ENCODE measurements at regions of chr13 and their contacts with region 1.

Region 1: GRCh38 chr13:74287724-74288169 is 153.5 kb upstream of the KLF12 start:
- DNase-seq: peak; percentile 87
- ATAC-seq: peak; percentile 73
- H3K4me3 Mint-ChIP-seq: peak overlapping the region; percentile 60
- H3K27ac Mint-ChIP-seq: peak overlapping the region; percentile 78
- H3K4me1 Mint-ChIP-seq: peaks cover 43% of the 10 kb centered on the region
- H3K27me3 Mint-ChIP-seq: no peaks in the 10 kb centered on the region

Region 2: DNA sequence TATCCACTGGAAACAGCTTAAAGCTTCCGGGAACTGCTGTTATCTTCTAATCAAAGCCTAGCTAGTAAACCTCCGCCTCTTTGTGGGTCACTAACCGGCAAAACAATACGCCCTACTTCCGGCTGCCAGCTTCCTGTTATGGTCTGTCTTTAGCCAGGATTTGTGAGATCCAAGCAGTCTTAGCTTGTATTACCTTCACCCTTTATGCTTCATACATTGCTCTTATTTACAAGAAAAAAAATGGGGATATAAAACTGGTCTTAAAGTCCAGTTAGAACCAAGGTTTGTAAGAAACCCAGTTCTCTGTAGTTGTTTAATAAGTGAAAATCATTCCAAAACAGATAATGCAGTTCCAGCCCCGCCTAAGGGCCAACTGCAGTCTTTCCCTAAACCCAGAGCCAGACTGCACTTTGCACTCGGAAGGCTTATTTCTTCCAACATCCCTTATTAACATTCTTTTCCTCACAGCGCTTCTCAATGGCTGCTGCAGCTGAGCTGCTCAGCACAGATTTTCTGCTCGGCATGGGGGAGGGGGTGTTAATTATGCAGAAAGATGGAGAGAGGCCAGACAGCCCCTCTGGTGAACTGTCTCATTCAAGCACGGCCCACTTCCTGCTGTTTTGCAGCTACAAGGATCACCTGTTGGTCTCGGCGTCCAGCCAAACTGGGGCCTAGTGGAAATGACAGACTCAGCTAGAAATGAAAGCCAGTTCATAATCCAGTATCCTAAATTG is 521.9 kb before region 1 on chr13:
- CTCF ChIA-PET with region 1: interaction called, 21 read pairs
- POLR2A ChIA-PET with region 1: no interaction called
- DNase-seq: peak; percentile 84
- ATAC-seq: peak; percentile 89
- H3K4me3 Mint-ChIP-seq: peak overlapping the region; percentile 77
- H3K27ac Mint-ChIP-seq: peak overlapping the region; percentile 97
- H3K4me1 Mint-ChIP-seq: peaks cover 50% of the 10 kb centered on the region
- H3K27me3 Mint-ChIP-seq: no peaks in the 10 kb centered on the region

Region 3: DNA sequence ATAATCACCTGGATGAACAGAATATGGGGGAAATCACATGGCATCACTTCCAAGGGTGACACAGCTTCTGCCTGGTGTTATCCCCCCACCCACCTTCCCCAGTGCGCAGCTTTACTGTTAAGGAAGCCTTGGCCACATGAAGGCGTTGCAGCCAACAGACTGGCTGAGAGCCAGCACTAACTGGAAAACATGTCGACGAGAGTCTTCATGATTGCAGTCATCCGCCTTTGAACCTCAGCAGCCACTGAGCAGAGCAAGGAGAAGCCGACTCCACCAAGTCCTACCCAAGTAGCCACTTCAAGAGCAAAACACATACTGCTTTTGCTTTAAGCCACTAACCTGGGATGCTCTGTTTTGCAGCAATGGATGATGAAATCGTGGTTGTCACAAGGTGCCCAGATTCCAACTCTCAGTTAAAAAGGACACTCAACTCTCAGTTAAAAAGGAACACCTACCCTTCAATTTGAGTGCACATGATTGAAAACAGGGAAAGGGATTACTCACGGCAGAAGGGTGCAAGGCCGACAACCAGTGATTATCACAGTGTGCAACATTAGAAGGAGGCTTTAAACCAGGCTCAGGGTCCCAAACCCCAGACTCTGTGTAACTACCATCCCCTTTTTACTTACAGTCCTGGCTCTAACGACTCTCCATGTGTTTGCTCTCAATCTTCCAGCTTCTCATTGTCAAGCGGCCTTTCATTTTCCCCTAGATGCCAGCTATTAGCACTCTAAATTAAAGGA is 302.6 kb before region 1 on chr13:
- CTCF ChIA-PET with region 1: interaction called, 13 read pairs
- POLR2A ChIA-PET with region 1: no interaction called
- DNase-seq: peak; percentile 71
- ATAC-seq: peak; percentile 85
- H3K4me3 Mint-ChIP-seq: peak overlapping the region; percentile 66
- H3K27ac Mint-ChIP-seq: peak overlapping the region; percentile 85
- H3K4me1 Mint-ChIP-seq: peaks cover 36% of the 10 kb centered on the region
- H3K27me3 Mint-ChIP-seq: no peaks in the 10 kb centered on the region

Region 4: GRCh38 chr13:74133657-74134201 is 154.0 kb before region 1 on chr13:
- CTCF ChIA-PET with region 1: interaction called, 134 read pairs
- POLR2A ChIA-PET with region 1: interaction called, 73 read pairs
- DNase-seq: peak; percentile 95
- ATAC-seq: peak; percentile 67
- H3K4me3 Mint-ChIP-seq: no peak overlapping the region
- H3K27ac Mint-ChIP-seq: peak overlapping the region; percentile 100
- H3K4me1 Mint-ChIP-seq: peaks cover 33% of the 10 kb centered on the region
- H3K27me3 Mint-ChIP-seq: peaks cover 3% of the 10 kb centered on the region

Region 5: DNA sequence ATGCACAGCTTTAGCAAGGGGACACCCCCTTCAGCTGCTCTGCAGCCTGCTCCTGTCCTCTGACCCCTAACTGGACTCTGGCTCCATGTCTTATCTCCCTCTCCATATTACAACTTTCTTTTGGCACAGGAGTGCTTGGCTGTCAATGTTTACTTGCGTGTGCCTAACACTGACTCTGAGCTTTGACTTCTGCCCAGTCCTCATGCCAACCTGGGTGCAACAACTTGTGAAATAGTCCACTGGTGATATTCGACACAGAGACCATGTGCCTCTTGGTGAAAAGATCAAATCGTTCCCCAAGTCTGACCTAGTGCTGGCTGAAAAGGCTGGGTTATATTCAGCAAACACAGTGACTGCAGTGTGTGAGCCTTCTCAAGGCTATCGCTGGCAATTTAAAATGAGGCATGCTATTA is 119.5 kb before region 1 on chr13:
- CTCF ChIA-PET with region 1: interaction called, 15 read pairs
- POLR2A ChIA-PET with region 1: no interaction called
- DNase-seq: no peak
- ATAC-seq: no peak
- H3K4me3 Mint-ChIP-seq: no peak overlapping the region
- H3K27ac Mint-ChIP-seq: no peak overlapping the region
- H3K4me1 Mint-ChIP-seq: no peaks in the 10 kb centered on the region
- H3K27me3 Mint-ChIP-seq: peaks cover 4% of the 10 kb centered on the region

Region 6: DNA sequence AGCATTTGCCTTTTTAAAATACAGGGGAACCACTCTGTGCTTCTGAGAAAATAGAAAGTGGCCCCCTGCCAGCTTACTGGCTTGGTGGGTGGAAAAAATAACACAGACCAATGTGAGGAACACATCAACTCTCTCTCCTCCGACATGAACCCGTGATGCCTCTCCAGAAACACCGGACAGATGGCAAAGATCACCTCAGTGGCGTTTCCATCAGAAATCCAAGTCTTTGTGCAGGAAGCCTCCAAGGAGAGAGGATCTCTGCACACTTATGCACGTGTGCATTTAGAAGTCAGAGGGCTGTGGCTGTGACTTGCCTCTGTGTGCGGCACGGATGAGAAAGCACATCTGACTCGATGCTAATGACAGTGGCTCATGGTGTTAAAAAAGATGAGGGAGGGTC is 41.3 kb before region 1 on chr13:
- CTCF ChIA-PET with region 1: interaction called, 114 read pairs
- POLR2A ChIA-PET with region 1: interaction called, 3 read pairs
- DNase-seq: no peak
- ATAC-seq: peak; percentile 35
- H3K4me3 Mint-ChIP-seq: no peak overlapping the region
- H3K27ac Mint-ChIP-seq: peak overlapping the region; percentile 46
- H3K4me1 Mint-ChIP-seq: peaks cover 73% of the 10 kb centered on the region
- H3K27me3 Mint-ChIP-seq: no peaks in the 10 kb centered on the region

Region 7: GRCh38 chr13:74389056-74389455 is 101.3 kb after region 1 on chr13:
- CTCF ChIA-PET with region 1: no interaction called
- POLR2A ChIA-PET with region 1: no interaction called
- DNase-seq: no peak
- ATAC-seq: no peak
- H3K4me3 Mint-ChIP-seq: no peak overlapping the region
- H3K27ac Mint-ChIP-seq: no peak overlapping the region
- H3K4me1 Mint-ChIP-seq: no peaks in the 10 kb centered on the region
- H3K27me3 Mint-ChIP-seq: no peaks in the 10 kb centered on the region

Measured in activated CD8-positive, alpha-beta T cell treated with anti-CD3 and anti-CD28 coated beads, Interleukin-2, amount 10 ng/mL, durations not matched to agents 7 days and 5 days (primary cell).